BJ (cell line): ENCODE measurements at regions of chr5 and their contacts with region 1.

Region 1: DNA sequence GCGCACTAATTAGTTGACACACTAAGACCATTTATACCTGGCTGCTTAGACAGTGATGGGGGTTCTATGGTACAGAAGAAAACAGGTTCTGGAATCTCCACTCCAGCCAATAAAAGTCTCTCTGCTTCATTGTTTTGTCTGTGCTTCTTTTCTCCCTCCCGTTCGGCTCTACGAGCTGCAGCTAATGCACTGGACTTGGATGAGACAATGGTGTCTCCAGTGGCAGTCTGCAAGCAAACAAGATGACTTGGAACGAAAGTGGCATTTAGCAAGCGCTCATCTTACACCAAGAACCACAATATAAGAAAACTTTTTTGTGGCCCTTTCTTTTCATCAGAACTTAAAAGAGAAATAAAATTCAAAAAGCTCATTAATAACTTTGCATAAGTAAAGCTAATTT is 30.2 kb downstream of the GFM2 start:
- DNase-seq: no peak
- H3K4me3 ChIP-seq: no peak overlapping the region
- H3K27me3 ChIP-seq: no peaks in the 10 kb centered on the region
- CTCF ChIP-seq: no peak

Region 2: GRCh38 chr5:74686956-74687751 is 49.6 kb before region 1 on chr5:
- CTCF ChIA-PET with region 1: interaction called, 4 read pairs
- POLR2A ChIA-PET with region 1: interaction called, 19 read pairs
- DNase-seq: no peak
- H3K4me3 ChIP-seq: no peak overlapping the region
- H3K27me3 ChIP-seq: no peaks in the 10 kb centered on the region
- CTCF ChIP-seq: no peak

Region 3: DNA sequence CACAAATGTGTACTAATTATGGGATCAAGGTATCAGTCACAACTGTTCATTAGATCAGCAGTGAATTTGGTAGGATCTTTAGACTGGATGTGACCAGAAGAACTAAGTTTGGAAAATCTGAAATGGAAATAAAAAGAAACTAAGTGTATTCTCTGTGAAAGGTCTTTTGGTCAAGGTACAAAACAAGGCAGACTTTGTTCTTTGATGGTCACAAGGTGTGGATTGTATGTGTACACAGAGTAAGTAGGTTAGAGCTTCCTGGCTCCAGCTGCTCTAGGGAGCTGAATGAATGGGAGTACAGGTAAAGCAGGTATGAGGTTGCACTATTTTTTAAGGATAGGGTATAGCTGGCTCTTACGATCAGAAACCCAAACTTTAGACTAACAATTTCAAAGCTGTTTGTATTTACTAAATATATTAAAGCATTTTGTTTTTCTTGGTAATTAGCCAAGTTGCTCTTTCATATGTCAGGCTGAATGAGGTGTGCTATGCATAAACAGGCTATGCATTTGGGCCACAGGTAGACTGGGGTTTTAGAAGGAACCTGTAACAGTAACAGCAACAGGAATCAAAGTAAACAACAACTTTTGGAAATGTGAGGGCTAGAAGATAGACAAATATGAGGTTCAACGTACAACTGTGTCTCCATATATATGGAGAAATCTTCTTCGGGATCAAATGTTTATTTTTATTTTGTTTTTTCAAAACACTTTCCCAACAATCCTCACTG is 96.9 kb after region 1 on chr5:
- CTCF ChIA-PET with region 1: no interaction called
- POLR2A ChIA-PET with region 1: no interaction called
- DNase-seq: no peak
- H3K4me3 ChIP-seq: no peak overlapping the region
- H3K27me3 ChIP-seq: no peaks in the 10 kb centered on the region
- CTCF ChIP-seq: no peak